ENCODE measurements at regions of chr5 and their contacts with region 1.

Region 1: DNA sequence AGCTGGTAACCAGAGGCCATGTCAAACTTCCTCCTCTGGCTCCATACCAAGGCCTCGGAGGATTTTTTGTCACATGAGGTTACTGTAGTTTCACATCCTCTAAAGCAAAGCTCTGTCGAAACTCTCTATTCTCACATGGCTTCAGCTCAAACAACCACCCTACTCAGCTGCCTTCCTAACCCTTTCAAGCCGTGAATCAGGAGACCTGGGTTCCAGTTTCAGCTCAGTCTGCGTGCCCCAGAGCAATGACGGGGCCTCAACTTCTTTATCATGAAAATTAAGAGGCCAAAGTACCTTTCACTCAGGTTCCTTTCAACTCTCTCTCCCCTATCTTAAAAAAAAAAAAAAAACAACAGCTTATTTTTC is 145.2 kb upstream of the MAP3K1 start:
- DNase-seq: peak in 1 of 2 experiments; percentile 77
- H3K4me3 ChIP-seq: no peak overlapping the region
- H3K27ac ChIP-seq: peak overlapping the region; percentile 89
- H3K4me1 ChIP-seq: peaks cover 53% of the 10 kb centered on the region
- H3K27me3 ChIP-seq: no peaks in the 10 kb centered on the region
- CTCF ChIP-seq: no peak

Region 2: DNA sequence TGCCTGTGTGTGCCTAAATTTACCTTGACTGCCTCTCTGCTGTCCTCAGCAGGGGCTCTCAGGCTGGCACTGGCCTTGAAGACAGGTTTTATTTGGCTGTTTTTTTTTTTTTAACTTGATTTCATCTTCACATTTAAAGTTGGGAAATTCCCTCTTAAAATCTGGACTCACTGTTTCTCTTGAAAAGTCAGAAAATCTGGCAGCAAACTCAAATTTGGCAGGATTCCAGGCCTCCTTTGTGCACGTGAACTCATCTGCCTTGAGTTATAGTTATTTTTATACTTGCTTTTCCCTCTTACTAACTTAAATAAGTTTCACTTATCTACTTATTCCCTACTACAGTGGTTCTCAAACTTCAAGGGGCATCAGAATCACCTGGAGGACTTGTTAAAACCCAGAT is 26.8 kb after region 1 on chr5:
- CTCF ChIA-PET with region 1: no interaction called
- POLR2A ChIA-PET with region 1: interaction called, 20 read pairs
- intact Hi-C with region 1: no loop called
- DNase-seq: no peak
- H3K4me3 ChIP-seq: no peak overlapping the region
- H3K27ac ChIP-seq: no peak overlapping the region
- H3K4me1 ChIP-seq: no peaks in the 10 kb centered on the region
- H3K27me3 ChIP-seq: no peaks in the 10 kb centered on the region
- CTCF ChIP-seq: no peak

Region 3: GRCh38 chr5:56710826-56711590 is 40.9 kb after region 1 on chr5:
- CTCF ChIA-PET with region 1: no interaction called
- POLR2A ChIA-PET with region 1: no interaction called
- intact Hi-C with region 1: no loop called
- DNase-seq: peak in 1 of 2 experiments; percentile 19
- H3K4me3 ChIP-seq: no peak overlapping the region
- H3K27ac ChIP-seq: no peak overlapping the region
- H3K4me1 ChIP-seq: no peaks in the 10 kb centered on the region
- H3K27me3 ChIP-seq: no peaks in the 10 kb centered on the region
- CTCF ChIP-seq: no peak

Region 4: DNA sequence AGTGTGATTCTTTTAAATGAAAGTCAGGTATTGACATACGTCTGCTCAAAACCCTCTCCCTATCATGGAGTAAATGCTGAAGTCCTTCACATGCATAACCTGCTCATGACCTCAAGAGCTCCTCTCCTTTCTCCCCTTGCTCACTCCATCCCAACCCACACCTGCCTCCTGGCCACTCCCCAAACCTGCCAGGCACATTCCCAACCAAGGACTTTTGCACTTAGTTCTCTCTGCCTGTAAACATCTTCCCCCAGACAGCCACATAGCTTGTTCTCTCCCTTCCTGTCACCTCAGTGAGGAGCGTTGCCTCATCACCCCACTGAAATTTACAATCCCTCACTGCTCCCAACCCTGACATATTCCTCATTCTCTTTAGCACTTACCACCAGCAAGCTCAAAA is 248.0 kb after region 1 on chr5:
- CTCF ChIA-PET with region 1: no interaction called
- POLR2A ChIA-PET with region 1: no interaction called
- intact Hi-C with region 1: no loop called
- DNase-seq: no peak
- H3K4me3 ChIP-seq: no peak overlapping the region
- H3K27ac ChIP-seq: no peak overlapping the region
- H3K4me1 ChIP-seq: no peaks in the 10 kb centered on the region
- H3K27me3 ChIP-seq: no peaks in the 10 kb centered on the region
- CTCF ChIP-seq: no peak

Region 5: GRCh38 chr5:56993241-56993640 is 323.1 kb after region 1 on chr5:
- CTCF ChIA-PET with region 1: no interaction called
- POLR2A ChIA-PET with region 1: no interaction called
- intact Hi-C with region 1: no loop called
- DNase-seq: no peak
- H3K4me3 ChIP-seq: no peak overlapping the region
- H3K27ac ChIP-seq: no peak overlapping the region
- H3K4me1 ChIP-seq: no peaks in the 10 kb centered on the region
- H3K27me3 ChIP-seq: no peaks in the 10 kb centered on the region
- CTCF ChIP-seq: no peak